Endothelial cell of umbilical vein (primary cell): ENCODE measurements at regions of chr17 and their contacts with region 1.

Region 1: GRCh38 chr17:32206861-32207260 is 58.8 kb upstream of the RHBDL3 start:
- DNase-seq: no peak
- H3K4me3 ChIP-seq: no peak overlapping the region
- H3K27ac ChIP-seq: no peak overlapping the region
- H3K4me1 ChIP-seq: peaks cover 9% of the 10 kb centered on the region
- H3K27me3 ChIP-seq: no peaks in the 10 kb centered on the region
- CTCF ChIP-seq: no peak
- POLR2A ChIP-seq: no peak

Region 2: DNA sequence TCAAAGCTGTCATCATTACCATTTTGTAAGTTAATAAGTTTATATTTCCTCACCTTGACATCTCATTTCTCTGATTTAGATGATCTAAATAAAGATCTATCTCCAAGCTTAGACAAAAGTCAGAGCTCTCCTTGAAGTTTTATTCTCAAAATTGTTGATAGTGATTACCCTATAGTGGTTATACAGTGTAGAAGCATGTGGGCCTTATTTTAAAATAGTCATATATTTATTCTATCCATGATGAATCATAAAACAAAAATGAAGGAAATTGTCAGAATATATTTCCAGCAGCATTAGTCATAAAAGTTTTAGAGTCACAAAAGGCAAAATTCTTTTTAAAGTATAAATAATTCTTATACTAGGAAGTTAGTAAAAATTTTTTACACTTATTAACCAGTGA is 15.6 kb before region 1 on chr17:
- CTCF ChIA-PET with region 1: interaction called, 16 read pairs
- POLR2A ChIA-PET with region 1: no interaction called
- dilution Hi-C with region 1: no loop called
- intact Hi-C with region 1: no loop called
- DNase-seq: peak; percentile 65
- H3K4me3 ChIP-seq: peak overlapping the region in 1 of 3 experiments; percentile 5
- H3K27ac ChIP-seq: peak overlapping the region; percentile 95
- H3K4me1 ChIP-seq: peaks cover 17% of the 10 kb centered on the region
- H3K27me3 ChIP-seq: no peaks in the 10 kb centered on the region
- CTCF ChIP-seq: no peak
- POLR2A ChIP-seq: no peak

Region 3: DNA sequence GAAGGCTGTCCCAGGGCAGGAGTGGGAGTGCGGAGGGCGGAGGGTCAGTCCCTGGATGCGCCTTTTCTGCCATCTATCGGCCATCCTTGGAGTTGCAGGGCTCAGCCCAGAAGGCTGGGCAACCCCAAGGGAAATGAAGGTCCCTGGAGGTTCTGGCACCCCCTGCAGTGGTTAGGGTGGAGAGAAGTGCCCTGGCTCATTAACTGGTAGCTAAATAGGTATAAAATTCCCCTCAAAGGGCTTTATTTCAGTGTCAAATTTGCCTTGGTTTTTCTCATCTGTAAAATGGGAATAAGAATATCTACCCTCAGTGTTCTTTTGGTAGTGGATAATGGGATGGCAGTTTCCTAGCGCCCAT is 112.7 kb after region 1 on chr17:
- CTCF ChIA-PET with region 1: interaction called, 11 read pairs
- POLR2A ChIA-PET with region 1: no interaction called
- dilution Hi-C with region 1: no loop called
- intact Hi-C with region 1: loop called (anchors 1 kb)
- DNase-seq: peak; percentile 57
- H3K4me3 ChIP-seq: no peak overlapping the region
- H3K27ac ChIP-seq: no peak overlapping the region
- H3K4me1 ChIP-seq: no peaks in the 10 kb centered on the region
- H3K27me3 ChIP-seq: peaks cover 5 to 8% of the 10 kb centered on the region in 2 experiments
- CTCF ChIP-seq: peak; percentile 93 to 95
- POLR2A ChIP-seq: no peak

Region 4: GRCh38 chr17:32551186-32551955 is 344.5 kb after region 1 on chr17:
- CTCF ChIA-PET with region 1: no interaction called
- POLR2A ChIA-PET with region 1: no interaction called
- dilution Hi-C with region 1: no loop called
- intact Hi-C with region 1: no loop called
- DNase-seq: peak; percentile 76
- H3K4me3 ChIP-seq: peak overlapping the region in 1 of 3 experiments; percentile 46
- H3K27ac ChIP-seq: peak overlapping the region; percentile 82
- H3K4me1 ChIP-seq: peaks cover 16% of the 10 kb centered on the region
- H3K27me3 ChIP-seq: no peaks in the 10 kb centered on the region
- CTCF ChIP-seq: no peak
- POLR2A ChIP-seq: no peak